Right ventricle myocardium inferior (tissue), 1 donor: ENCODE measurements at regions of chr3 and their contacts with region 1.

Region 1: DNA sequence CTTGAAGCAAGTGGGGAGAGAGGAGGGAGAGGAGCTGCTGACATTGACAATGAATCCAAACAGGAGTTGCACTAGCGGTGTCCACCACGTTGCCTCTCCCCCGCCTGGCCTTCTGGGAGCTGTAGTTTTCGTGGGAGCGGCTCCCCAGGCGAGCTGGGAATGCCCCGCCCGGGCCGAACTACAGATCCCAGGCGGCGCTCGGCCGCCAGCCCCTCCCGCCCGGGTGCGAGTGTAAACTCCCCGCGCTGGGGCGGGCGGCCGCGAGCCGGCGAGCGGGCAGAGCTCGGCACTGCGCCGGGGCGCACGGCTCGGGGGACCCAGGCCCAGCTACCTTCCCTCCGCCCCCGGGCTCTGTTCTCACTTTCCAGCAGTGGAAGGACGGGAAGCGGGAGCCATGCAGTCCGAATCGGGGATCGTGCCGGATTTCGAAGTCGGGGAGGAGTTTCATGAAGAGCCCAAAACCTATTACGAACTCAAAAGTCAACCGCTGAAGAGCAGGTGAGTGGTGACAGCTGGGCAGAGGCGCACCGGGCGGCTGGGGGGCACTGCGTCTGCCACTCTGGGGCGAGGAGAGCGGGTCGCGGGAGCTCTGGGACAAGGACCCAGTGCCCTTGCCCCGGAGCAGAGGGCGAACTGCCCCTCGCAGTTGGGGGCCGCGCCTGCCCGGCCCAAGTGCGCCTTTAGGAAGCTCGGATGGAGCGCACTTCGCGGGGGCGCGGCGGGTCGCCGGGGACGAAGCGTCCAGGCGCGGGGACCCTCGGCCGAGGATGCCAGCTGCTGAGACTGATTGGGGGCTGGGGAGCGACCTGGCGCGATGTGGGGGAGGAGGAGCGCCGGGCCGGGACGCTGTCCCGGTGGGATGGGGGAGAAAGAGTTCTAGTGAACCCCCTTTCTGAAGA is at the start of gene MITF:
- DNase-seq: peak; percentile 96
- ATAC-seq: peak; percentile 97
- total RNA-seq, gene MITF: 71.0 TPM

Region 2: GRCh38 chr3:69791919-69792399 is 52.5 kb after region 1 on chr3:
- intact Hi-C with region 1: loop called (anchors 2 kb)
- DNase-seq: no peak
- ATAC-seq: peak; percentile 56